Activated B cell treated with CpG ODN at 0.5 μM for 24 hours (primary cell): ENCODE measurements at regions of chr5 and their contacts with region 1.

Region 1: DNA sequence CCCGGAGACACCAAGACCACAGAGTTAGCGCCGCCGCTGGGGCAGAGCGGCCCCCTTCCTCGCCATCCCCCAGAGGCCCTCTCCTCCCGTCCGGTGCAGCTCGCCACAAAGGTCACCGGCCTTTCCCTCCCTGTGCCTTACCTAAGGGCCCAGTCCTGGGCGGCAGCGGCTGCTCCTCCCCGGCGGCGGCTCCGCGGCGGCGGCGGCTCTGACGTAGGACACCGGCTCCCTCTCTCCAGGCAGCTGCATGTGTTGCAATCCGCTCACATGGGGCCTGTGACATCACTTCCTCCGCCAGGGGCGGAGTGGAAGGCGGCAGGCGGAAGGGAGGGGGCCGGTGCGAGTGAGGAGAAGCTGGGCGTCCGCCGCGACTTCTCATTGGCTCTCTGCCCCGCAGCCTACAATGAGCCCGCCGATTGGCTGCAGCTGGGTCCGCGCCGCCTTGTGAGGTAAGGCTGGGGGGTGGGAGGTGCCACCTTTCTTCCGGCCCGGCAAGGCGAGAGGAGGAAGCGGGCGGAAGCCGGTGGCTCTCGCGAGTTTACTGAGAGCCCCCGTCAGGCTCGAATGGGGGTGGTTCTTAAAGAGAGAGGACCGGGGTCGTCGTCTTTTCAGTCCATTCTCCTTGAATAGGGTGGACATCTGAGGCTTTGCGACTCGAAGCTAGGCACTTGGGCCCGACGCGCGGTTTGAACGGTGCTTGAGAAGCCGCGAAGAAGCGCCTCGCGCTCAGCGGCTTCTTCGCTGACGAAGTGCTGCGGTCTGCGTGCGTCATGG is at the start of gene ETF1:
- DNase-seq: peak; percentile 97
- ATAC-seq: peak; percentile 90
- H3K4me3 Mint-ChIP-seq: peak within 1 kb of the TSS; percentile 100
- H3K27ac Mint-ChIP-seq: peak within 1 kb of the TSS; percentile 99
- H3K4me1 Mint-ChIP-seq: peaks cover 66% of the 10 kb centered on the region
- H3K27me3 Mint-ChIP-seq: no peaks in the 10 kb centered on the region
- CTCF ChIP-seq: no peak
- total RNA-seq, gene ETF1: 95.7 and 99.6 TPM in 2 replicates

Region 2: DNA sequence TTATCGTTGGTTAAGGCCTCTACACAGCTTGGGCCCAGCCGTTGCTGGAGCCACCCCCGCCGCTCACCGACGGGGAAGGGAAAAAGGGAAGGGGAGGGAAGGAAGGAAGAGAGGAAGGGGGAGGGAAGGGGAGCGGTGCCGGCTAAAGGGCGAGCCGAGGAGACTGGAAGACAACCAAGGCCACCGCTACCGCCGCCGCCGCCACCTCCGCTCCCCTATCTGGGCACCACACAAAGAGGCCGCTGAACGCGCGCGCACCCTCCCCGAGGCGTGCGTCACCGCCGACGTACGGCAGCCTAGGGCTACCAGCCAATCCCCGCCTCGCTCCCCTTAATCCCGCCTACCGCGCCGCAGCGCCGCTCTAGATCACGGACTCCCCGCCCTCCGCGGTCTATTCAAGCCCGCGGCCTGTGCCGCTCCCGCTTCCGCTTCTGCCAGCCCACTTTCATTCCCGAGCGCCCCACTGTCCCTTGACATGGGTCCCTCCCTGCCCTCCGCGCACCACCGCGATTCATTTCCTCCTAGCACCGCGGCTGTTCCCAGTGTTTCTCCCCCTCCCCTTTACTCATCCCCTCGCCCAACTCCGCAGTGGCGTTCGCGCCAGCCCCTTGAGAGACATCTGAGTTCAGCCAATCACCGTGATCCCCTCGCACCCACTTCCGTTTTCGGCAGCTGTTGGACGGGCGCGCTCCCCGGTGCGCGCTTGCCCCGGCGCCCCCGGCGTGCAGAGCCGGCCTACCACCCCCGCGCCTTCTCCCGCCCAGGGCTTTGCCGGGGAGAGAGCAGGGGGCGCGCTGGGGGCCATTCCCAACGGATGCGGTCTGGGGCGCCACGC is 788.8 kb before region 1 on chr5 and contains the start of gene HNRNPA0:
- CTCF ChIA-PET with region 1: no interaction called
- POLR2A ChIA-PET with region 1: interaction called, 14 read pairs
- intact Hi-C with region 1: loop called (anchors 1 kb)
- DNase-seq: peak; percentile 95
- ATAC-seq: peak; percentile 82
- H3K4me3 Mint-ChIP-seq: peak within 1 kb of the TSS; percentile 95
- H3K27ac Mint-ChIP-seq: peak within 1 kb of the TSS; percentile 100
- H3K4me1 Mint-ChIP-seq: peaks cover 35% of the 10 kb centered on the region
- H3K27me3 Mint-ChIP-seq: no peaks in the 10 kb centered on the region
- CTCF ChIP-seq: no peak
- total RNA-seq, gene HNRNPA0: 31.2 and 34.7 TPM in 2 replicates

Region 3: DNA sequence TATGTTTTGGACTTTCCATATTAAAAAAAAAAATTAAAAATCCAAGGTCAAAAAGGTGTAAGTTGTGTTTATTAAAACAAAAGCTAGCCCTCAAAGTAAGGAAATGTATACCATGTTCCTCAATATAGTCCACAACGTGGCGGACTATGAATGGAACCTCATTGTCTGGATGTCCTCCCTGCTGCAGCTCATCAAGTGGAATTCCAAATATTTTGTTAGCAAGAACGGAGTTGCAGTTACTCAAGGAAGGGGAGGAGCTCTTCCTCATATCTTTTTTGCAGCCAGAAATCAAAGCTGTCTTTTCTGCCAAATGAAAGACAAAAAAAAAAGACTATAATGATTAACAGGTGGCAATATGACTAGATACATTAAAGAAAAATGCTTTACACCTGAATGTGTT is 524.3 kb before region 1 on chr5:
- CTCF ChIA-PET with region 1: no interaction called
- POLR2A ChIA-PET with region 1: no interaction called
- intact Hi-C with region 1: no loop called
- DNase-seq: no peak
- ATAC-seq: no peak
- H3K4me3 Mint-ChIP-seq: no peak overlapping the region
- H3K27ac Mint-ChIP-seq: no peak overlapping the region
- H3K4me1 Mint-ChIP-seq: peaks cover 32% of the 10 kb centered on the region
- H3K27me3 Mint-ChIP-seq: no peaks in the 10 kb centered on the region
- CTCF ChIP-seq: no peak

Region 4: GRCh38 chr5:138337685-138338410 is 205.3 kb before region 1 on chr5 and contains the start of gene FAM53C:
- CTCF ChIA-PET with region 1: no interaction called
- POLR2A ChIA-PET with region 1: interaction called, 6 read pairs
- intact Hi-C with region 1: loop called (anchors 1 kb)
- DNase-seq: peak; percentile 97
- ATAC-seq: peak; percentile 81
- H3K4me3 Mint-ChIP-seq: peak within 1 kb of the TSS; percentile 90
- H3K27ac Mint-ChIP-seq: peak within 1 kb of the TSS; percentile 100
- H3K4me1 Mint-ChIP-seq: peaks cover 37% of the 10 kb centered on the region
- H3K27me3 Mint-ChIP-seq: no peaks in the 10 kb centered on the region
- CTCF ChIP-seq: no peak
- total RNA-seq, gene FAM53C: 23.5 and 24.9 TPM in 2 replicates

Region 5: DNA sequence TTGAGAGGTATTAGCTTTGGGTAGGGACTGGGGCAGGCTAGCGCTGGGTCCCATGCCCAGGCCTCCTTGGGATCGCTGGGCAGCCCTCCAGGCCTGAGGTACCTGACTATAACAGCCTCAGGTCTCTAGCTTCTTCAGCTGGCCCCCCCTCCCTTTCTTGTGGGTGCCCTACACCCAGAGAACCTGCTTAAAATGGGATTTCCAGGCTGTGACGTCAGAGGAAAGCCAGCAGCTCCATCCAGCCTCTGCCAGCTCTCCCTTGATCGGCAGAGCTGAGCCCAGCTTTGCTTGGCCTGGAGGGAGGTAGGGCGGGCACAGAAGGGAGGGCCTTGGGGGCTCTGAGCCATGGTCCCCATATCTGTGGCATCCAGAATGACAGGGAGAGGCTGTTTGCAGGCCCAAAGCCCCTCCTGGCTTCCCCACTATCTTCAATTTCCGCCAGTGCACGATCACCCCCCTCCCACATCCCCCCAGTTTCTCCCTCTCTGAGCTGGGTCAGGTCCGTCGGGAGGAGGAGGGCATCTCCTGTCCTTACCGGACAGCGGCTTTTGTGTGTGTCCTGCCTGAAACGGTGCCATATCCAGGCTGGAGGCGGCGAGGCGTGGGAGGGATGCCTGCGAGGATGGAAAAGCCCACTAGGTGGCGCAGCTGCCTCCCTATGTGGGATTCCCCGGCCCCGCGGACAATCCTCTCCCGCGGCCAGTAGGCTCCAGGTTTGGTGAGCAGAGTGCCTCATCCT is 93.5 kb before region 1 on chr5:
- CTCF ChIA-PET with region 1: interaction called, 8 read pairs
- POLR2A ChIA-PET with region 1: no interaction called
- intact Hi-C with region 1: loop called (anchors 1 kb)
- DNase-seq: peak; percentile 75
- ATAC-seq: peak; percentile 98
- H3K4me3 Mint-ChIP-seq: no peak overlapping the region
- H3K27ac Mint-ChIP-seq: no peak overlapping the region
- H3K4me1 Mint-ChIP-seq: peaks cover 6% of the 10 kb centered on the region
- H3K27me3 Mint-ChIP-seq: peaks cover 4% of the 10 kb centered on the region
- CTCF ChIP-seq: peak; percentile 59

Region 6: DNA sequence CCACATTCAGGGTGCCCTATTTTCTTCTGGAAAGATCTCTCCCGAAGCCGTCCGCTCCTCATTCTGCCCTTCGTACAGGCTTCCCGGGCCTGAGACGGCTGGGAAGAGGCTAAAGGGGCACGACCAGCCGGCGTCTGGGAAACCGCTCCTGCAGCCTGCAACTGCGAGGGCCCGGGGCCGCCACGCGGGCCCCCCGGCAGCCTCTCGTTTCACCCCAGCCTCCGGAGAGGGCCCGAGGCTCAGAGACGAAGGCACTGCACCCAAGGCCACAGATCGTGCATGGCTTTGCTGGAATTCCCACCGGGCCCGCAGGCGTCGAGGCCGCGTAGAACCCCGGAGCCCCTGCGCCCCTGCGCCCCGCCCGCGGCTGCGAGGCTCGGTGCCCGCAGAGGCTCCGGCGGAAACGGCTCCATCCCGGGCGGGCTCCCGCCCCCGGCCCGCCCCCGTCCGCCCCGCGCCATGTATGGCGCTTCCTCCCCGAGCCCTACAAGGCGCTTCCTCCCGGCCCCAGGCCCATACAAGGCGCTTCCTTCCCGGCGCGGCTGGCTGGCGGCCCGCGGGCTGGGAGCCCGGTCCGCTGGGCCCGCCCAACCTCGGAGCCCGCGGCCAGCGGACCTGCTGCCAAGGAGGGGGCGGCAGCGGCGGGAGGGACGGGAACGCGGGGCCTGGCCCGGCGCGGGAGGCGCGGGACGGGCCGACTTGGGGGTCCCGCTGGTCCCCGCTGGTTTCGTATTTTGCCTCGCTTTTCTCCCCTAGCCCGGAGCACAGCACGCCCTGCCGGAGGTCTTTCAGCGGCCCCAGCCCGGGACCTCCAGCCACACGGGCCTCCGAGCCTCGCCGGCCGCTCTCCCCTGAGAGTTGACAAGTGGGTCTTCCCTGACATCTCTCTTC is 51.2 kb before region 1 on chr5:
- CTCF ChIA-PET with region 1: no interaction called
- POLR2A ChIA-PET with region 1: interaction called, 3 read pairs
- intact Hi-C with region 1: loop called (anchors 1 kb)
- DNase-seq: peak; percentile 77
- ATAC-seq: peak; percentile 100
- H3K4me3 Mint-ChIP-seq: peak overlapping the region; percentile 87
- H3K27ac Mint-ChIP-seq: no peak overlapping the region
- H3K4me1 Mint-ChIP-seq: peaks cover 4% of the 10 kb centered on the region
- H3K27me3 Mint-ChIP-seq: peaks cover 24% of the 10 kb centered on the region
- CTCF ChIP-seq: no peak

Region 7: DNA sequence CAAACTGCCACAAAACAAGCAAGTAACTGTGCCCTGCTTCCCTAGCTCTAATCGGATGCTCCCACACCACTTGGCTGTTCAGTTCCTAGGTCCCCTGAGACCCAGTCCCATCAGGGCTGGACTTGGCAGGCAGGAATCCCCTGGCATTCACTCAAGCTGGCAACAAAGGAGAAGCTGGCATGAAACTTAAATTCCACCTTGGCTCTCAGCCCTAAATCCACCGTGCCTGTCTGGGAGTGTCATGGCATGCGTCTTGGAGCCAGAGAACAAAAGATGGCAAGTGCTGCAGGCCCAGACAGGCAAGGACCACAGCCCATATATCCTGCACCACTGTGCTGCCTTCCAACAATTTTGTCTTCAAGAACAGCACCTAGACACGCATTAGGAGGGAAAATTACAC is 38.3 kb before region 1 on chr5:
- CTCF ChIA-PET with region 1: no interaction called
- POLR2A ChIA-PET with region 1: no interaction called
- intact Hi-C with region 1: no loop called
- DNase-seq: no peak
- ATAC-seq: no peak
- H3K4me3 Mint-ChIP-seq: no peak overlapping the region
- H3K27ac Mint-ChIP-seq: no peak overlapping the region
- H3K4me1 Mint-ChIP-seq: no peaks in the 10 kb centered on the region
- H3K27me3 Mint-ChIP-seq: no peaks in the 10 kb centered on the region
- CTCF ChIP-seq: no peak

Region 8: DNA sequence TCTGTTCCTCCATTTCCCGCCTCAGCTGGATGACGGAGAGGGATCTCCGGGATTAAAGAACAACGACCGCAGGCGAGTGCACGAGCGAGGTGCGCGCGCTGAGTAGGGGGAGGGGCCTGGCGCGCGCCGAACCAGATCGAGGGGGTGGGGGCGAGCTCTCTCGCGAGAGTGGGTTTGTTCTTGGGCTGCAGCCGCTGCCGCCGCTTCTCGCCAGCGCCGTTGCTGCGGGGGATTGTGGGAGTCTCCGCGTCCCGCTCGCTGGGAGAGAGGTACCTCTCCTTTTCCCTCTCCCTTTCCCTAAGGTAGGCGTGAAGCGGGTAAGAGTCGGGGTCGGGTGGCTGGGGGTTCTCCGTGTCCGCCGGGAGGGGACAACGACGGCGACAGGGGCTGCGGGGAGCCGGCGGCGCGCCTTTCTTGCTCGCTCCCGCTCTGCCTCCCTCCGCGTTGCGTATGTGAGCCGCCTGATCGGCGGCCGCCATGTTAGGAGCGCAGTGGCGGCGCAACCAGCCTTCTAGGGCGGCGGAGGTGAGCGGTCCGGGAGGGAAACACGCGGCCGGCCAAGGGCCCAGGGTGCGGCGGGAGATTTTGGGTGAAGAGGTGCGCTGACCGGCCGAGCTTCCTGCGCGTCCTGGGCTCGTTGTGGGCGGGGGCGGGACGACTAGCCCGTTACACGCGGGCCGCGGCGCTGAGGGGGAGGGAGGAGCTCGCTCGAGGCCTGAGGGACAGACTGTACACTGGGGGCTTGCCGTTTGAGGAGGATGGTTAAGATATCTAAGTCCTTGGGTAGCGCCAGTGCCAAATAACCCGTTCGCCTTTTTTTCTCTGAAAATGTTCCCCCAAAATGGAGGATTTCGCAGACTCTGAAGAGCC is 750.6 kb after region 1 on chr5 and contains the start of gene MATR3:
- CTCF ChIA-PET with region 1: no interaction called
- POLR2A ChIA-PET with region 1: interaction called, 9 read pairs
- intact Hi-C with region 1: loop called (anchors 1 kb)
- DNase-seq: peak; percentile 87
- ATAC-seq: peak; percentile 90
- H3K4me3 Mint-ChIP-seq: peak within 1 kb of the TSS; percentile 97
- H3K27ac Mint-ChIP-seq: peak within 1 kb of the TSS; percentile 96
- H3K4me1 Mint-ChIP-seq: peaks cover 48% of the 10 kb centered on the region
- H3K27me3 Mint-ChIP-seq: no peaks in the 10 kb centered on the region
- CTCF ChIP-seq: no peak
- total RNA-seq, gene MATR3: 242 and 294 TPM in 2 replicates

Region 9: GRCh38 chr5:139844472-139845145 is 1301.5 kb after region 1 on chr5:
- CTCF ChIA-PET with region 1: no interaction called
- POLR2A ChIA-PET with region 1: no interaction called
- intact Hi-C with region 1: loop called (anchors 1 kb)
- DNase-seq: peak; percentile 57
- ATAC-seq: peak; percentile 40
- H3K4me3 Mint-ChIP-seq: peak overlapping the region; percentile 5
- H3K27ac Mint-ChIP-seq: no peak overlapping the region
- H3K4me1 Mint-ChIP-seq: peaks cover 16% of the 10 kb centered on the region
- H3K27me3 Mint-ChIP-seq: peaks cover 13% of the 10 kb centered on the region
- CTCF ChIP-seq: peak; percentile 61